ENCODE measurements at regions of chr10 and their contacts with region 1.

Region 1: DNA sequence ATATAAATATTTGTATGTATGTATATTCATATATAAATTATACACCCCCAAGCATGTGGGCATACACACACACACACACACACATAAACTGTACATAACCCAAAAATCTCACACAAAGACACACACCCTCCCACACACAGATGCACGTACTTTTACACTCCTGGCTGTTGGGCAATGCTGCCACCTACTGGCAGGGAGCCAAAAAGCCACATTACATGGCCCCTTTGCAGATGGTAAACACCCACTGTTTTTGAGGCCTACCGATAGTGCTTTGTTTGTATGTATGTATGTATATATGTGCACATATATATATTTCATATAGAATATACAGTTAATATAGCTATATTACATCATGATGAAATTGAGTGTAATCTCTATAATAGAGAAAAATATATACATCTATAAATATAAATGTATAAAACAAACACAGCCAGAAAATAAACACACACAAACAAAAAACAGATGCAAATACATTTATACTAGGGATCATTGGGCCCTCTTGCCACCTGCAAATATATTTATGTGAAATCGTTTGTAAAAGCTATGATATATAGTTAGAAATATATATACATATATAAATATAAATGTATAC is 120.1 kb upstream of the ACBD5 start:
- DNase-seq: peak; percentile 14 to 35
- ATAC-seq: peak in 1 of 2 donors; percentile 51
- H3K4me3 ChIP-seq: no peak overlapping the region
- H3K27ac ChIP-seq: no peak overlapping the region
- H3K4me1 ChIP-seq: no peaks in the 10 kb centered on the region
- H3K27me3 ChIP-seq: no peaks in the 10 kb centered on the region
- CTCF ChIP-seq: peak in 4 of 5 experiments; percentile 23 to 58 (median 34)
- POLR2A ChIP-seq: no peak

Region 2: GRCh38 chr10:26890956-26891355 is 469.7 kb before region 1 on chr10:
- in situ Hi-C with region 1: loop called in 3 of 4 experiments (anchors 5 kb)
- intact Hi-C with region 1: no loop called
- DNase-seq: no peak
- ATAC-seq: no peak
- H3K4me3 ChIP-seq: no peak overlapping the region
- H3K27ac ChIP-seq: no peak overlapping the region
- H3K4me1 ChIP-seq: no peaks in the 10 kb centered on the region
- H3K27me3 ChIP-seq: no peaks in the 10 kb centered on the region
- CTCF ChIP-seq: no peak
- POLR2A ChIP-seq: no peak

Region 3: DNA sequence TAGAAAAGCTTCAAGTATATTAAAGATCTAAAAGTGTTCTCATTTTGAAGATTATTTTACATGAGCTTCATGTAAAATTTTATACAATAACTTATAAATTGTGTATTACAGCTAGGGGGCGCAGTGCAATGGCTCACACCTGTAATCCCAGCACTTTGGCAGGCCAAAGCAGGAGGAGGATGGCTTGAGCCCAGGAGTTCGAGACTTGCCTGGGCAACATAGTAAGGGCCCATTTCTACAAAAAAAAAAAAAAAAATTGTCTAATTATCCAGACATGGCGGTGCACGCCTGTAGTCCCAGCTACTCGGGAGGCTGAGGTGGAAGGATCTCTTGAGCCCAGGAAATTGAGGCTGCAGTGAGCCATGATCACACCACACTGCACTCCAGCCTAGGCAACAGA is 136.7 kb before region 1 on chr10:
- in situ Hi-C with region 1: loop called in 1 of 4 experiments (anchors 10 kb)
- intact Hi-C with region 1: no loop called
- DNase-seq: no peak
- ATAC-seq: no peak
- H3K4me3 ChIP-seq: no peak overlapping the region
- H3K27ac ChIP-seq: no peak overlapping the region
- H3K4me1 ChIP-seq: no peaks in the 10 kb centered on the region
- H3K27me3 ChIP-seq: no peaks in the 10 kb centered on the region
- CTCF ChIP-seq: peak; percentile 13 to 59 (median 34)
- POLR2A ChIP-seq: no peak